Activated CD4-positive, alpha-beta memory T cell treated with anti-CD3 and anti-CD28 coated beads for 36 hours (primary cell): ENCODE measurements at regions of chr21 and their contacts with region 1.

Region 1: DNA sequence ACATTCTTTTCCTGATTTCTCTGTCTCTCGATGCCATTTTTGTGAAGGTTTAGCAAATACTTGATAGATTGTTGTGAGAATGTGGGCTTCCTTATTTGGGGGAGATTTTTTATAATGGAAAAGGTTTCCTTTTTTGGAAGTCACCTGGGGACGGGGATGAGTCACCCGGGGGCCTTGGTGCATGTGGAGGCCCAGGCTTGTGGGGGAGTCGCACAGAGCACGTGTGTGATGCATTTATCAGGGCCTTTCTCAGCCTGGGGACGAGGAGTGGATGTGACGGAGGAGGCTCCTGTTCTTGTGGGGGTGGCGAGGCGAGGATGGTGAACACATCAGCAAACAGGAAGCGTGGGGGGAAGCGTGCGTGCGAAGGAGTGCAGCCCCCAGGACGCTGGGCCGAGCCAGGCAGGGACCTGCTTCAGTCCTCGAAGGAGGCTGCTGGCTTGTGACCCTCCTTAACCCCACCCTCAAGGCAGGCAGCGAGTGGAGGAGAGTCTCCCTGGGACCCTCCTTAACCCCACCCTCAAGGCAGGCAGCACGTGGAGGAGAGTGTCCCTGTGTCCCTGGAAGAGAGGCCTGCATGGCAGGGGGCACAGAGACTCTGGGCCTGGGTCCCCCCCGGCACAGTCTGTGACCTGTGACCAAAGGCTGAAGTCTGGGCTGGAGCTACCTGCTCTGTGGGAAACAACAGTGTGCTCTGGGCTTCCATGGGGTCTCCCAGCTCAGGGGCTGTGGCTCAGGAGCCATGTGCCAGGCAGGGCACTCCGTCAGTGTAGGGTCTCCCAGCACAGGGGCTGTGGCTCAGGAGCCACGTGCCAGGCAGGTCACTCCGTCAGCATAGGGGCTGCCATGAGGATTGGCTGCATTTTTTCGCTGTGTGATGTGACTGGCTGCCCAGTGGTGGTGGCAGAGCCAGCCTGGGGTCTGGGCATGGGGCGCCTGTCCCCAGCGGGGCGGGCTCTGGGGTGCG is 57.2 kb downstream of the AGPAT3 start:
- DNase-seq: peak; percentile 75
- H3K4me3 Mint-ChIP-seq: peak overlapping the region; percentile 38
- H3K27ac Mint-ChIP-seq: peak overlapping the region; percentile 87
- H3K4me1 Mint-ChIP-seq: peaks cover 45% of the 10 kb centered on the region
- H3K27me3 Mint-ChIP-seq: no peaks in the 10 kb centered on the region

Region 2: GRCh38 chr21:43703035-43703880 is 219.0 kb before region 1 on chr21:
- CTCF ChIA-PET with region 1: no interaction called
- POLR2A ChIA-PET with region 1: no interaction called
- intact Hi-C with region 1: no loop called
- DNase-seq: peak; percentile 34
- H3K4me3 Mint-ChIP-seq: no peak overlapping the region
- H3K27ac Mint-ChIP-seq: no peak overlapping the region
- H3K4me1 Mint-ChIP-seq: peaks cover 7% of the 10 kb centered on the region
- H3K27me3 Mint-ChIP-seq: peaks cover 1% of the 10 kb centered on the region

Region 3: DNA sequence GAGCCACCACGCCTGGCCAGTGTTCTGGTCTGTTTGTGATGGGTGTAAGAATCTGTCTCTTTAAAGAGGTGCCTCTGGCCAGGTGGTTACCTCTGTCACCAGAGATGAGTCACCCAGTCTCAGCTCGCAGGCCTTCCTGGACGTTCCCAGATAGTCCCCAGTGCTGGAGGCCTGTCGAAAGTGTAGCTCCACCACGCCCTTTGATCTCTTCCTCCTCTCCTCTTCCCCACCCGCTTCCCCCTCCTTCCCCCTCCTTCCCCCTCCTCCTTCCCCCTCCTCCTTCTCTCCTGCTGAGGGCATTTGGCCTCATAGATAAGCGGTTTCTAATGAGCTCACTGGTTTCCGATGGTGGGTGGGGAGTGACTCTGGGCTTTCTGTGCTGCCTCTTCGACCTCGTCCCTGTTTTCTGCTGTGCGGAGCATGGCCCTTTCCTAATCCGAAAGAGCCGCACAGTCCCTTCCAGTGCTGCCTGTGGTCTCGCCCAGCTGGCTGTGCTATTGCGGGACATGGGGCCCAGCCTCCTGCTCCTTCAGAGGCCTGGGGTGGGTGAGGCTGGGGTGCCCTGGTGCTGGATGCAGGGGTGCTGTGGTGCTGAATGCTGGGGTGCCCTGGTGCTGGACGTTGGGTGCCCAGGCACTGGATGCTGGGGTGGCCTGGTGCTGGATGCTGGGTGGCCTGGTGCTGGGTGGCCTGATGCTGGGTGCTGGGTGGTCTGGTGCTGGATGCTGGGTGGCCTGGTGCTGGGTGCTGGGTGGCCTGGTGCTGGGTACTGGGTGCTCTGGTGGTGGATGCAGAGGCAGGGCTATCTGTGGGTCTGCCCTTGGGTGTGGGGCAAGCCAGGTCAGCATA is 38.0 kb before region 1 on chr21:
- CTCF ChIA-PET with region 1: no interaction called
- POLR2A ChIA-PET with region 1: no interaction called
- intact Hi-C with region 1: loop called (anchors 5 kb)
- DNase-seq: peak; percentile 52
- H3K4me3 Mint-ChIP-seq: no peak overlapping the region
- H3K27ac Mint-ChIP-seq: peak overlapping the region; percentile 23
- H3K4me1 Mint-ChIP-seq: peaks cover 74% of the 10 kb centered on the region
- H3K27me3 Mint-ChIP-seq: no peaks in the 10 kb centered on the region

Region 4: GRCh38 chr21:43911015-43911934 is 11.0 kb before region 1 on chr21:
- CTCF ChIA-PET with region 1: no interaction called
- POLR2A ChIA-PET with region 1: no interaction called
- intact Hi-C with region 1: no loop called
- DNase-seq: no peak
- H3K4me3 Mint-ChIP-seq: no peak overlapping the region
- H3K27ac Mint-ChIP-seq: no peak overlapping the region
- H3K4me1 Mint-ChIP-seq: peaks cover 25% of the 10 kb centered on the region
- H3K27me3 Mint-ChIP-seq: no peaks in the 10 kb centered on the region